PC-3 (cell line): ENCODE measurements at regions of chr9 and their contacts with region 1.

Region 1: GRCh38 chr9:22238809-22239684 is 207.6 kb upstream of the DMRTA1 start:
- DNase-seq: peak; percentile 51
- ATAC-seq: peak; percentile 42
- H3K4me3 ChIP-seq: peak overlapping the region; percentile 53; the same call in 1 of the 2 replicates
- H3K27ac ChIP-seq: peak overlapping the region; percentile 89
- H3K4me1 ChIP-seq: peaks cover 47% of the 10 kb centered on the region
- H3K27me3 ChIP-seq: no peaks in the 10 kb centered on the region
- CTCF ChIP-seq: peak; percentile 57

Region 2: GRCh38 chr9:21239911-21240310 is 999.1 kb before region 1 on chr9 and contains the start of gene IFNA14:
- CTCF ChIA-PET with region 1: no interaction called
- POLR2A ChIA-PET with region 1: no interaction called
- intact Hi-C with region 1: no loop called
- DNase-seq: no peak
- ATAC-seq: no peak
- H3K4me3 ChIP-seq: no peak within 1 kb of the TSS
- H3K27ac ChIP-seq: no peak within 1 kb of the TSS
- H3K4me1 ChIP-seq: no peaks in the 10 kb centered on the region
- H3K27me3 ChIP-seq: peaks cover 14% of the 10 kb centered on the region
- CTCF ChIP-seq: no peak
- total RNA-seq, gene IFNA14: not detected in 2 replicates

Region 3: GRCh38 chr9:22008736-22009562 is 230.1 kb before region 1 on chr9 and contains the start of gene CDKN2B:
- CTCF ChIA-PET with region 1: interaction called, 15 read pairs
- POLR2A ChIA-PET with region 1: interaction called, 3 read pairs
- intact Hi-C with region 1: loop called (anchors 2 kb)
- DNase-seq: peak; percentile 95
- ATAC-seq: peak; percentile 89
- H3K4me3 ChIP-seq: peak within 1 kb of the TSS; percentile 87
- H3K27ac ChIP-seq: peak within 1 kb of the TSS; percentile 90
- H3K4me1 ChIP-seq: peaks cover 9% of the 10 kb centered on the region
- H3K27me3 ChIP-seq: no peaks in the 10 kb centered on the region
- CTCF ChIP-seq: peak; percentile 83
- total RNA-seq, gene CDKN2B: 32.2 and 32.7 TPM in 2 replicates

Region 4: DNA sequence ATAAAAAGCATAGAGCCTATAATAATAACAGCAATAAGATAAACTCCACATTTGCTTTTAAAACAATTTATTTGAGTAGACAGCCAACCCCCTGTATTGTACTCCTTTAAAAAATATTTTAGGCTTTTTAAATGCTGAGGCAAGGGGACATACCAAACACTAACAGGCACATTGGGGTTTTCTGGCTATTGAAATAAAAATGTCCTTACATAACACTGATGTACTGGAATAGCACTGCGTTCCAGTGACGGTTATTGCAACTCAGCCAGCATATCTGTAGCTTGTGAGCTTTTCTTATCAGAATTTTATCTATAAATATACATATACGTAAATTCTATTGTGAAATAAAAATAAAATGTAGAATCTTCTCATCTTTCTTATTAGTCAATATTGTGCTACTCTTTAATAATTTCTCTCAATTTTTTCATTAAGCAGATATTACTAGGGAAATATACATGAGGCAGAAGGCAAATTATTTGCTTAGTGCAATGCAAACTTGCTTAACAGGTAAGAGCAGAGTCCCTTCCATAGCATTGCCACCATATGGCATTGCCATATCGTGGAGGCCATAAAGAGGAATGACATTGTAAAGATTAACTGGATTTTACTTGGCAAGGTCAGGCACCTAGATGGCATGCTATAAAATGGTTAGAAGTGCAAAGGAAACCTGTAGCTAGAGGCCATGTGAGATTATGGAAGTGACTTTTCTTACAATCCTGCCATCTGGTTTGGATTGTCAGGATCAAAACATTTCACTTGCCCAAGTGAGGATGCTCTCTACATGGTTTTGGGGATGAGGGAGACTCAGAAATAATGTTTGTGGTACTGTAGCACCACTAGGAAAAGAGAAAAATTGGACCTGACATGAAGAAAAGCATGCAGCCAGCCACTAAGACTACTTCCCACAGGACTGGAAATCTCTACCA is 135.1 kb before region 1 on chr9:
- CTCF ChIA-PET with region 1: interaction called, 4 read pairs
- POLR2A ChIA-PET with region 1: no interaction called
- intact Hi-C with region 1: loop called (anchors 2 kb)
- DNase-seq: peak; percentile 57
- ATAC-seq: peak; percentile 29
- H3K4me3 ChIP-seq: no peak overlapping the region
- H3K27ac ChIP-seq: peak overlapping the region; percentile 95
- H3K4me1 ChIP-seq: peaks cover 37% of the 10 kb centered on the region
- H3K27me3 ChIP-seq: no peaks in the 10 kb centered on the region
- CTCF ChIP-seq: no peak

Region 5: GRCh38 chr9:22119537-22120158 is 119.4 kb before region 1 on chr9:
- CTCF ChIA-PET with region 1: interaction called, 8 read pairs
- POLR2A ChIA-PET with region 1: interaction called, 4 read pairs
- intact Hi-C with region 1: loop called (anchors 2 kb)
- DNase-seq: peak; percentile 61
- ATAC-seq: no peak
- H3K4me3 ChIP-seq: no peak overlapping the region
- H3K27ac ChIP-seq: peak overlapping the region; percentile 95; the same call in 1 of the 2 replicates
- H3K4me1 ChIP-seq: peaks cover 47% of the 10 kb centered on the region
- H3K27me3 ChIP-seq: no peaks in the 10 kb centered on the region
- CTCF ChIP-seq: peak; percentile 64

Region 6: DNA sequence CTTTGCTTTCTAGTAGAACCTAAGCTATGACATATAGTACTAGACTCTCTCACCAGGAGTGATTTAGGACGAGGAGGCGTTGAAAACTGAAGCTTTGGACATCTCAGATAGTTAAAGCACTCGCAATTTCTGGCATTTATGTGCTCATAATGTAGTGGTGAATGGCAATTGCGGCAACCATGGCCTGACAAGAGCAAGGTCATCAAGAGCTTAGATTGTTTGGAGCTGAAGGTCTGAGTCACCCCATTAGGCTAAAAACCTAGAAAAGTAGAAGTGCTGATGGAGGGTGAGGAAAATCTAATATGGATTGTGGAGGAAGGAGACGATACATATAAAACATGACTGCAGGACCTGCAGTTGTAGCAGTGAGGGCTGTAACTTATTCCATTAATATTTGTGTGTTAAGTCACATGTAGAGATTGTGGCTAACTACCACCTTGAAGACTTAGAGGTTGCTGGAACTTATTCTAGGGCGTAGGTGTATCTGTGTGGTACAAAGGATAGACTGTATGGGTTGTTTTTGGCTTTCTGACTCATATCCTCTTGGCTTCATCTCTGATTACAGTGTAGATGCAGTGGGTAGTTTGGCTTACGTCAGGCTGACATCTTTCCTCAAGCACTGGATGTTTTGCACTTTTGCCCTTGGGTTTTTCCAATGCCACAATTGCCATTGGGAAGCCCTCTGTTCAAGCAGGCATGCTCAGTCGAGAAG is 91.1 kb before region 1 on chr9:
- CTCF ChIA-PET with region 1: interaction called, 6 read pairs
- POLR2A ChIA-PET with region 1: interaction called, 5 read pairs
- intact Hi-C with region 1: loop called (anchors 2 kb)
- DNase-seq: peak; percentile 77
- ATAC-seq: peak; percentile 93
- H3K4me3 ChIP-seq: no peak overlapping the region
- H3K27ac ChIP-seq: peak overlapping the region; percentile 91
- H3K4me1 ChIP-seq: peaks cover 42% of the 10 kb centered on the region
- H3K27me3 ChIP-seq: no peaks in the 10 kb centered on the region
- CTCF ChIP-seq: no peak

Region 7: GRCh38 chr9:22169727-22170503 is 69.1 kb before region 1 on chr9:
- CTCF ChIA-PET with region 1: no interaction called
- POLR2A ChIA-PET with region 1: no interaction called
- intact Hi-C with region 1: loop called (anchors 1 kb)
- DNase-seq: peak; percentile 78
- ATAC-seq: peak; percentile 88
- H3K4me3 ChIP-seq: peak overlapping the region; percentile 1; the same call in 1 of the 2 replicates
- H3K27ac ChIP-seq: peak overlapping the region; percentile 97
- H3K4me1 ChIP-seq: peaks cover 45% of the 10 kb centered on the region
- H3K27me3 ChIP-seq: no peaks in the 10 kb centered on the region
- CTCF ChIP-seq: no peak

Region 8: GRCh38 chr9:22211593-22212360 is 27.3 kb before region 1 on chr9:
- CTCF ChIA-PET with region 1: no interaction called
- POLR2A ChIA-PET with region 1: no interaction called
- intact Hi-C with region 1: loop called (anchors 1 kb)
- DNase-seq: peak; percentile 96
- ATAC-seq: peak; percentile 76
- H3K4me3 ChIP-seq: 0 out of 2 replicates have a peak overlapping the region, but pooled peaks have one; percentile 2
- H3K27ac ChIP-seq: peak overlapping the region; percentile 99
- H3K4me1 ChIP-seq: peaks cover 80% of the 10 kb centered on the region
- H3K27me3 ChIP-seq: no peaks in the 10 kb centered on the region
- CTCF ChIP-seq: no peak